Heart left ventricle (tissue), 16 donors: ENCODE measurements at regions of chr4 and their contacts with region 1.

Region 1: DNA sequence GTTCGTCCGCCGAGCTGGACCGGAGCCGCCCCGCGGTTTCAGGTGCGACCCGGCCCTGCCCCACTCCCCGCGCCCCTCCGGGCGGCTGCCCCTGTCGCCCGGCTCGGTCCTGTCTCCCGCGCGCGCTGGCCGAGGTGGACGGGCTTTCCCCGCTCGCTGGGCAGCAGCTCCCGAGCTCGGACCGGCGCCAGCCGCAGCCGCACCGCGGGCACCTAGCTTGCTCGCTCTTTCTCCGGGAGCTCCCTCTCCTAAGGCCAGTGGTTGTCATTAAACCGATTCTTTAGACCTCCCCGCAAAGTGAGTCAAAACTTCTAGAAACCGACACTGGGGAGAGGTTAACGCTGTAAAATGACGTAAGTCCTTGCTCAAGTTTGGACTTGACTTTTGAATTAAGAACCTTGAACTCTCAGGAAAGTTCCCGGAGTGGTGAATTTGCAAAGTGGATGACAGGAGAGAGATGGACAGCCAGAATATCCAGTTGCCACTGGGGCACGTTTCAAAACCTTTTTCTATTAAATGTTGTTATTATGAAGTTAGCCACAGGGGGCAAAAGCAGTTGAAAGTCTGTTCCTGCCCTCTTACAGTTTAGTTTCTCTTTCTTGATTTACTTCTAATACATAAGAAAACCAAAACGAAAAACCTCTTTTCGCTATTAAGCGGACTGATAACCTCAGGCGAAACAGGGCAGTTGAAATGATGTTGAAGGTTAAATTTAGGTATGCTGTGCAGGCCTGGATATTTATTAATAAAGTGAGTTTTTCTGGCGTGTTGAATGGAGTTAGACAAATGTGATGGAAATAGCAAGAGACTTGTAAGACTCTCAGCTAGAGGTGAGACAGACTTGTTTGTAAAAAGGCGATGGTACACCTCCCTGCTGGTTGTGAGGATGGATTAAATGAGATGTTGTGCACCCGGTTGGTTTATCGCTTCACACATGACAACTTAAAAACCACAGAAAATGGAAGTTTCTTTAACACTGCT is 847 bp downstream of the PI4K2B start:
- DNase-seq: peak; percentile 37 to 82 (median 45)
- ATAC-seq: peak; percentile 49 to 76 (median 68)
- H3K4me3 ChIP-seq: peak overlapping the region; percentile 74 to 99 (median 90)
- H3K27ac ChIP-seq: peak overlapping the region; percentile 83 to 97 (median 94)
- H3K4me1 ChIP-seq: peaks cover 0 to 22% (median 7%) of the 10 kb centered on the region in 12 donors
- H3K27me3 ChIP-seq: no peaks in the 10 kb centered on the region
- CTCF ChIP-seq: peak; percentile 16 to 66 (median 48)
- POLR2A ChIP-seq: no peak

Region 2: DNA sequence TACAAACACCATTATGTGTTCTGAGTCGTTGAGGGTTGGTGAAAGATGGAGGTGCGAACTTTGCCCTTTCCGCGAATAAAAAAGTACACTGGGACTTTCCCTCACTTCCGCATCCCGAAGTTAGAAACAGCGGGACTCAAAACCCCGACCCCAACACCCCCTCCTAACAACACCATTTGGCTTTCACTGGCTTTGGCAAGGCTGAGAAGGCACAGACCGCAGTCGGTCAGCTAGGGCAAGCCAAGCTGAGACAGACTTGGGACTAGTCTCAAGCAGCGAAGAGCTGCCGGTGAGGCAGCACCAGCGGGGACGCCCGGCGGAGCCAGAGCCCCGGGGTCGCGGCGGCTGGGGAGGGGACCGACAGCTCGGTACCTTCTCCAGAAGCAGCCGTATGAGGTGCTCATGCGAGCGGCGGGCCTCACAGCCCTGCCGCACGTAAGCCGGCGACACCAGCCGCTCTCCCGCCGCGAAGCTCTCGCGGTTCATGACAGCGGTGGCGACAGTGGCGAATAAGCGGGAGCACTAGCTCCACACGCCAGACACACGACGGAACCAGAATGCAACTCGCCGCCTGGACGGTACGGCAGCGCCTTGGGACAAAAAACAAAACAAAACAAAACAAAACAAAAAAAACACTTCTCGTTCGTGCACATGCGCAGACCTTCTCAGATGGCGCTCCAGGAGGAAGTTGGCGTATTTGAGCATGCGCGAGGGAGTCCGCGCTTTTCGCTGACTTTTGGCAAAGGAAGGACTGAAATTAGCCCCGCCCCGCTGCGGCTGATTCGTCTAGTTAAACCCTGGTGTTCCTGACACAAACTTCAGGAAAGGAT is 74.6 kb before region 1 on chr4 and contains the start of gene SEPSECS:
- intact Hi-C with region 1: loop called in 6 of 10 experiments (anchors 1 to 5 kb)
- DNase-seq: peak; percentile 98 to 99 (median 98)
- ATAC-seq: peak; percentile 91 to 96 (median 93)
- H3K4me3 ChIP-seq: peak within 1 kb of the TSS; percentile 59 to 96 (median 82)
- H3K27ac ChIP-seq: peak within 1 kb of the TSS; percentile 83 to 98 (median 92)
- H3K4me1 ChIP-seq: peaks cover 0 to 37% (median 15%) of the 10 kb centered on the region in 12 donors
- H3K27me3 ChIP-seq: no peaks in the 10 kb centered on the region
- CTCF ChIP-seq: peak in 1 of 12 donors; percentile 23
- POLR2A ChIP-seq: no peak
- total RNA-seq, gene SEPSECS: 3.2 to 7.6 (median 6.2) TPM

Region 3: GRCh38 chr4:25172961-25173915 is 61.4 kb before region 1 on chr4:
- intact Hi-C with region 1: loop called in 3 of 10 experiments (anchors 5 to 10 kb)
- DNase-seq: peak in 4 of 5 donors; percentile 37 to 74 (median 56)
- ATAC-seq: peak; percentile 92 to 99 (median 97)
- H3K4me3 ChIP-seq: no peak overlapping the region
- H3K27ac ChIP-seq: peak overlapping the region in 11 of 12 donors; percentile 4 to 89 (median 72)
- H3K4me1 ChIP-seq: peaks cover 0 to 38% (median 16%) of the 10 kb centered on the region in 12 donors
- H3K27me3 ChIP-seq: no peaks in the 10 kb centered on the region
- CTCF ChIP-seq: no peak
- POLR2A ChIP-seq: no peak

Region 4: DNA sequence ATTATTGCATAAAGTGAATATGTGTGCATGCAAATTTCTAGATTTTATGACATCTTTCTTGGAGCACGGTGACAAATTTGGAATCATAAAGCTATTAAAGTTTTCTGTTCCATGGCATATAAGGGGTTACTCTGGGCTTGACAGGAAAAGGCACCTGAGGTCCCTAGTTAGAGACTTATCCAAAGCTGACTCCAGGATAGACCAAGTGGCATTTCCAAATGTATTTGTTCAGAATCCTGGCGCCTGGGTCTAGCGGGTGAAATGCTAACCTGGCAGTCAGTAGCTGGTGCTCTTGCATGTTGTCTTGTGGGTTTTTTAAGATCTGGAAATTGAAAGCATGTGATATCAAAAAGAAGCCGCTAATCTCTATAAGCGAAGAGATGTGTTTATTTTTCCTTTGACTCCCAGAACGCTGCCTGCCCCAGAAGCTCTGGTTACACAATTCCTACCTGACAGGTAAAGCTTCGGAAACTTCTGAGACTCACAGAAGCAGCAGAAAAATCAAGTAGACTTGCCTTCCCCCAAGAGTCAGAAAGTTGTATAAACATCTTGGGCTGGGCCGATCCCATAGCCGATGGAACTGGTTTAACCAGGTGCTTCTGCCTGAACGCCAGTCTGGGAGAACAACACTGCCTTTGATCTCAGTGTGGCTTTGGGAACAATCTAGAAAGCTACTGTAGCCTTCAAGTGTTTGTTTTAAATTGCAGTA is 65.0 kb after region 1 on chr4:
- intact Hi-C with region 1: loop called in 1 of 10 experiments (anchors 10 kb)
- DNase-seq: no peak
- ATAC-seq: no peak
- H3K4me3 ChIP-seq: no peak overlapping the region
- H3K27ac ChIP-seq: no peak overlapping the region
- H3K4me1 ChIP-seq: no peaks in the 10 kb centered on the region
- H3K27me3 ChIP-seq: peaks cover 0 to 9% (median 0%) of the 10 kb centered on the region in 9 donors
- CTCF ChIP-seq: no peak
- POLR2A ChIP-seq: no peak

Region 5: DNA sequence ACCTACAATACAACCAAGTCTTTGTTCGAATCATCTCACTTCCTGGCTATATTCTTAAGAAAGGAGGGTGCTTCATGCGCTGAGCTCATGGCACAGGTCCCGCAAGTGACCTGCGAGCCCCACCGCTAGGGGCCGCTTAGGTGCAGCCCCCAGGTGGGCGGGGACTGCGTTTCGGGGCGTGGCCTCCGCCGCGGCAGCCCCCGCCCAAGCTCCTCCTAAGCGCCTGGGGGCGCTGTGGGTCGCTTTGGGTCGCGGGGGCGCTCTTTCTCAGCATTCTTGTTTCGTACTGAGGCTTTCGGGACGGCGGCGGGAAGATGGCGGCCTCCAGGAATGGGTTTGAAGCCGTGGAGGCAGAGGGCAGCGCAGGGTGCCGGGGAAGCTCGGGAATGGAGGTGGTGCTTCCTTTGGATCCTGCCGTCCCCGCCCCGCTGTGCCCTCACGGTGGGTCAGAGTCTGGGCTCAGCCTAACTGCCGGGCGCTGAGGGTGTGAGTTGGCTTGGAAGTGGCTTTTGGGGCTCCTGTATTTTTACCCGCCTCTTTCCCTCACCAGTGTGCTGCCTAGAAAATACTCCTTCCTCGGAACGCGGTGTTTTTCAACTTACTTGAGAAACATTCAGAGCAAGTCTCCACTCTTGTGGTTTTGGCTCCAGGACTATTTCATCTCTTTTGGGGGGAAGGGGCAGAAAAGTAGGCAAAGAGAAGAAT is 78.0 kb after region 1 on chr4 and contains the start of gene ZCCHC4:
- intact Hi-C with region 1: loop called in 6 of 10 experiments (anchors 2 to 10 kb)
- DNase-seq: peak; percentile 89 to 95 (median 91)
- ATAC-seq: peak; percentile 97 to 99 (median 98)
- H3K4me3 ChIP-seq: peak within 1 kb of the TSS; percentile 42 to 87 (median 78)
- H3K27ac ChIP-seq: peak within 1 kb of the TSS in 11 of 12 donors; percentile 47 to 81 (median 69)
- H3K4me1 ChIP-seq: peaks cover 0 to 17% (median 9%) of the 10 kb centered on the region in 12 donors
- H3K27me3 ChIP-seq: no peaks in the 10 kb centered on the region
- CTCF ChIP-seq: peak; percentile 95 to 100 (median 99)
- POLR2A ChIP-seq: peak in 1 of 2 donors; percentile 54
- total RNA-seq, gene ZCCHC4: 5.2 to 9.6 (median 7.7) TPM

Region 6: DNA sequence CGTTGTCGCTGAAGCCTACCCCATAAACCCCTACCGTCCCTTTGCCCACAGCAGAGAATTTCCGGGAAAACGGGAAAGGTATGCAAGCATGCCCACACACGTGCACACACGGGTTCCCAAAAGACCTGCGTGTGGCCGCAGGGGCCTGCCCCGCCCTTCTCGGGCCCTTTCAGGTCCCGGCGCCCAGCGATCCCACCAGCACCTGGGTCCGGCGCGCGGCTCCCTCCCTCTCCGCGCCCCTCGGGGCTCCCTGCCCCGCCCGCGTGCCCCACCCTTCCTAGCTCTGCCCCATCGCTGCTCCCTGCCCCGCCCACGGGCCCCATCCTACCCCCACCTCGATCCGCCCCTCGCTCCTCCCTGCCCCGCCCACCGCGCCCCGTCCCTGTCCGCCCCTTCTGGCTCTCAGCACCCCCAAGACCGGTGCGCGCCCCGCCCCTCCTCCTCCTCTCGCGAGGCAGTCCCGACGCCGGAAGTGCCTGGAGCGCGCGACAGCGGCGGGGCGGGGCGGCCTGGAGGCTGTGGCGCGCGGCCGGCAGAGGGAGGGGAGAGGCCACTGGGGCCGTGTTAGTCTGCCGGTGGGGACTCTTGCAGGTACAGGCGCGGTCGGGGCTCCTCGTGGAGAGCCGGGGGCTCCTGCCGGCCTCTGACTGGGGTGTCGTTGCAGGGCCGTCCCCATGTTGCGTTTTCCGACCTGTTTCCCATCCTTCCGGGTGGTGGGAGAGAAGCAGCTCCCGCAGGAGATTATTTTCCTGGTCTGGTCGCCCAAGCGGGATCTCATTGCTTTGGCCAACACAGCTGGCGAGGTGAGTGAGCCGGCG is 142.3 kb after region 1 on chr4 and contains the start of gene ANAPC4:
- intact Hi-C with region 1: loop called in 1 of 10 experiments (anchors 10 kb)
- DNase-seq: peak; percentile 95 to 98 (median 97)
- ATAC-seq: peak; percentile 95 to 98 (median 98)
- H3K4me3 ChIP-seq: peak within 1 kb of the TSS; percentile 50 to 97 (median 94)
- H3K27ac ChIP-seq: peak within 1 kb of the TSS in 11 of 12 donors; percentile 54 to 86 (median 75)
- H3K4me1 ChIP-seq: peaks cover 0 to 32% (median 10%) of the 10 kb centered on the region in 12 donors
- H3K27me3 ChIP-seq: no peaks in the 10 kb centered on the region
- CTCF ChIP-seq: peak in 5 of 12 donors; percentile 10 to 24 (median 18)
- POLR2A ChIP-seq: peak in 1 of 2 donors; percentile 65
- total RNA-seq, gene ANAPC4: 6.7 to 15.5 (median 12.5) TPM